Right cardiac atrium (tissue), 5 donors: ENCODE measurements at regions of chr9 and their contacts with region 1.

Region 1: GRCh38 chr9:8189881-8190280 is 390.3 kb upstream of the DMAC1 start:
- DNase-seq: no peak
- ATAC-seq: no peak
- H3K4me3 ChIP-seq: no peak overlapping the region
- H3K27ac ChIP-seq: no peak overlapping the region
- H3K4me1 ChIP-seq: no peaks in the 10 kb centered on the region
- H3K27me3 ChIP-seq: no peaks in the 10 kb centered on the region

Region 2: GRCh38 chr9:8259028-8259427 is 69.1 kb after region 1 on chr9:
- intact Hi-C with region 1: loop called in 1 of 4 experiments (anchors 5 kb)
- DNase-seq: no peak
- ATAC-seq: no peak
- H3K4me3 ChIP-seq: no peak overlapping the region
- H3K27ac ChIP-seq: no peak overlapping the region
- H3K4me1 ChIP-seq: peaks cover 2% of the 10 kb centered on the region
- H3K27me3 ChIP-seq: no peaks in the 10 kb centered on the region

Region 3: DNA sequence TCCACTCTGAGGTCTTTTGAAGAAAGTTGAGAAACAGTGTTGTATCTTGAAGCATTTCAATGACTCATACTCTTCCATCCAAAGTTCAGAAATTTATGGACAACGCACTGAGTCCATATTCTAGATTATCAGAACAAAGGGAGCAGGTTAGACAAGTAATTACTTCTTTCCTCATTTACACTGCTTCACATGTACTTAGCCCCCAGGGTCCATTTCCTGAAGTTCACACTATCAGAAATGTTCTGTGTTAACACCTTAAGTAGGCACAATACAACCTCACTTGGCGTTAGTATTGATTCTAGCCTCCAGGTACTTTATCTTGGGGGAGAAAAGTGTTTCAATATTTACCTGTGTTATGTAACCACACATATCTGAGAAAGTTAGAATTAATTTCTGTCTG is 97.6 kb after region 1 on chr9:
- intact Hi-C with region 1: loop called in 1 of 4 experiments (anchors 10 kb)
- DNase-seq: no peak
- ATAC-seq: no peak
- H3K4me3 ChIP-seq: no peak overlapping the region
- H3K27ac ChIP-seq: no peak overlapping the region
- H3K4me1 ChIP-seq: no peaks in the 10 kb centered on the region
- H3K27me3 ChIP-seq: no peaks in the 10 kb centered on the region